ENCODE measurements at regions of chr1 and their contacts with region 1.

Region 1: GRCh38 chr1:159071970-159072582 is 4.5 kb downstream of the AIM2 start:
- DNase-seq: no peak
- ATAC-seq: peak in 6 of 8 donors; percentile 62 to 74 (median 66)
- H3K4me3 ChIP-seq: no peak overlapping the region
- H3K27ac ChIP-seq: no peak overlapping the region
- H3K4me1 ChIP-seq: peaks cover 0 to 43% (median 0%) of the 10 kb centered on the region in 9 donors
- H3K27me3 ChIP-seq: no peaks in the 10 kb centered on the region
- CTCF ChIP-seq: peak; percentile 40 to 86 (median 76)

Region 2: DNA sequence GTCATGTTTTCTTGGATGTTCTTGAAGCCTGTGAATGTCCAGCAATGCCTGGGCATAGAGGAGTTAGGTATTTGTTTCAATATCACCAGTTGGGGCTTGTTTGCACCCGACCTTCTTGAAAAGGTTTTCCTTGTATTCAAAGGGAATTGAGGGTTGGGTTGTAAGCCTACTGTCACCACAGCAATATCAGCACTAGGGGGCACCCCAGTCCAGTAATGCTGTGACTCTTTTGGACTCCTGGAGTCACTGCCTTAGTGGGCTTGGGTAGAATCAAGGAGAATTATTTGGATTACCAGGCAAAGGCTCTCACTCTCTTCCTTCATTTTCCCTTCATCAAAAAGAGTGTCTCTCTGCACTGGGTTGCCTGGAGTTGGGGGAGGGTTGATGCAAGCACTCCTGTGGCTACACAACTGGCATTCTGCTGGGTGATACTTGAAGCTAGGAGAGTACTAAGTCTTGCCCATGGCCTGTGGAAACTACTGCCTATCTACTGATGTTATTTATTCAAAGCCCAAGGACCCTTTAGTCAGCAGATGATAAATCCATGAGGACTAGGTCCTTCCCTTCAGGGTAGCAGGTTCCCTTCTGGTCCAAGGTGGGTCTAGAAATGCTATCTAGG is 565.6 kb before region 1 on chr1:
- intact Hi-C with region 1: loop called in 2 of 10 experiments (anchors 10 kb)
- DNase-seq: peak; percentile 9
- ATAC-seq: no peak
- H3K4me3 ChIP-seq: no peak overlapping the region
- H3K27ac ChIP-seq: no peak overlapping the region
- H3K4me1 ChIP-seq: peaks cover 0 to 12% (median 0%) of the 10 kb centered on the region in 9 donors
- H3K27me3 ChIP-seq: peaks cover 0 to 9% (median 0%) of the 10 kb centered on the region in 7 donors
- CTCF ChIP-seq: peak in 7 of 9 donors; percentile 19 to 70 (median 29)

Region 3: GRCh38 chr1:158998781-158999161 is 73.3 kb before region 1 on chr1:
- intact Hi-C with region 1: loop called in 1 of 10 experiments (anchors 5 kb)
- DNase-seq: peak; percentile 45 to 59
- ATAC-seq: peak; percentile 23 to 75 (median 55)
- H3K4me3 ChIP-seq: peak overlapping the region in 9 of 10 donors; percentile 16 to 65 (median 53)
- H3K27ac ChIP-seq: peak overlapping the region; percentile 27 to 95 (median 86)
- H3K4me1 ChIP-seq: peaks cover 0 to 40% (median 16%) of the 10 kb centered on the region in 9 donors
- H3K27me3 ChIP-seq: no peaks in the 10 kb centered on the region
- CTCF ChIP-seq: peak; percentile 76 to 96 (median 91)